GM12878 (cell line): ENCODE measurements at regions of chr17 and their contacts with region 1.

Region 1: GRCh38 chr17:32006957-32007462 is at the start of gene LRRC37B:
- DNase-seq: peak; percentile 23
- ATAC-seq: peak; percentile 96
- H3K4me3 ChIP-seq: peak within 1 kb of the TSS; percentile 95
- H3K27ac ChIP-seq: peak within 1 kb of the TSS; percentile 51
- H3K4me1 ChIP-seq: no peaks in the 10 kb centered on the region; the same call in 1 of the 2 replicates
- H3K27me3 ChIP-seq: no peaks in the 10 kb centered on the region
- CTCF ChIP-seq: peak; percentile 84 to 92 (median 92)
- EP300 ChIP-seq: no peak
- POLR2A ChIP-seq: peak; percentile 70
- RAD21 ChIP-seq: peak; percentile 46
- polyA plus RNA-seq, gene LRRC37B: 3.2 to 3.4 TPM

Region 2: GRCh38 chr17:31778523-31778922 is 228.5 kb before region 1 on chr17:
- CTCF ChIA-PET with region 1: no interaction called
- POLR2A ChIA-PET with region 1: no interaction called
- RAD21 ChIA-PET with region 1: no interaction called
- SMC1A ChIA-PET with region 1: no interaction called
- in situ Hi-C with region 1: no loop called
- intact Hi-C with region 1: no loop called
- DNase-seq: no peak
- ATAC-seq: no peak
- H3K4me3 ChIP-seq: no peak overlapping the region
- H3K27ac ChIP-seq: no peak overlapping the region
- H3K4me1 ChIP-seq: no peaks in the 10 kb centered on the region; the same call in 1 of the 2 replicates
- H3K27me3 ChIP-seq: no peaks in the 10 kb centered on the region
- CTCF ChIP-seq: no peak
- EP300 ChIP-seq: no peak
- POLR2A ChIP-seq: no peak
- RAD21 ChIP-seq: no peak

Region 3: GRCh38 chr17:32019228-32019627 is 12.2 kb after region 1 on chr17:
- CTCF ChIA-PET with region 1: interaction called, 11 read pairs
- POLR2A ChIA-PET with region 1: no interaction called
- RAD21 ChIA-PET with region 1: no interaction called
- SMC1A ChIA-PET with region 1: interaction called, 8 read pairs
- in situ Hi-C with region 1: no loop called
- intact Hi-C with region 1: no loop called
- DNase-seq: no peak
- ATAC-seq: no peak
- H3K4me3 ChIP-seq: no peak overlapping the region
- H3K27ac ChIP-seq: no peak overlapping the region
- H3K4me1 ChIP-seq: no peaks in the 10 kb centered on the region; the same call in 1 of the 2 replicates
- H3K27me3 ChIP-seq: no peaks in the 10 kb centered on the region
- CTCF ChIP-seq: no peak
- EP300 ChIP-seq: no peak
- POLR2A ChIP-seq: no peak
- RAD21 ChIP-seq: no peak

Region 4: DNA sequence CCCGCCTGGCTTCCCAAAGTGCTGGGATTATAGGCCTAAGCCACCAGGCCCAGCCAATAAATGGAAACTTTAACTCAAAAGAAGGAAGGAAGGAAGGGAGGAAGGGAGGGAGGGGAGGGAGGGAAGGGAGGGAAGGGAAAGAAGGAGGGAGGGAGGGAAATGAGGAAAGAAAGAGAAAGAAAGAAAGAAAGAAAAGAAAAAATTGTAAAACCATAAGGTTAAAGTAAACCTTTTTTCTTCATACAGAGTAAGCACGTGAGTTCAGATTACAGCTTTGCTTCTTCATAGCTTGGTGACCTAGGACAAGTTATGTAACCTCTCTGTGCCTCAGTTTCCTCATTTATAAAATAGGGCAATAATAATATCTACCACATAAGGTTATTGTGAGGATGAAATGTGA is 26.2 kb after region 1 on chr17:
- CTCF ChIA-PET with region 1: no interaction called
- POLR2A ChIA-PET with region 1: no interaction called
- RAD21 ChIA-PET with region 1: no interaction called
- SMC1A ChIA-PET with region 1: no interaction called
- in situ Hi-C with region 1: no loop called
- intact Hi-C with region 1: no loop called
- DNase-seq: no peak
- ATAC-seq: no peak
- H3K4me3 ChIP-seq: no peak overlapping the region
- H3K27ac ChIP-seq: no peak overlapping the region
- H3K4me1 ChIP-seq: no peaks in the 10 kb centered on the region
- H3K27me3 ChIP-seq: no peaks in the 10 kb centered on the region
- CTCF ChIP-seq: no peak
- EP300 ChIP-seq: no peak
- POLR2A ChIP-seq: no peak
- RAD21 ChIP-seq: no peak

Region 5: GRCh38 chr17:32127158-32127897 is 120.3 kb after region 1 on chr17:
- CTCF ChIA-PET with region 1: interaction called, 13 read pairs
- POLR2A ChIA-PET with region 1: interaction called, 4 read pairs
- RAD21 ChIA-PET with region 1: interaction called, 3 read pairs
- SMC1A ChIA-PET with region 1: interaction called, 5 read pairs
- in situ Hi-C with region 1: no loop called
- intact Hi-C with region 1: no loop called
- DNase-seq: peak; percentile 69
- ATAC-seq: peak; percentile 98
- H3K4me3 ChIP-seq: peak overlapping the region; percentile 80
- H3K27ac ChIP-seq: peak overlapping the region; percentile 95
- H3K4me1 ChIP-seq: peaks cover 7% of the 10 kb centered on the region; the same call in 1 of the 2 replicates
- H3K27me3 ChIP-seq: no peaks in the 10 kb centered on the region
- CTCF ChIP-seq: no peak
- EP300 ChIP-seq: no peak
- POLR2A ChIP-seq: peak; percentile 83
- RAD21 ChIP-seq: no peak

Region 6: DNA sequence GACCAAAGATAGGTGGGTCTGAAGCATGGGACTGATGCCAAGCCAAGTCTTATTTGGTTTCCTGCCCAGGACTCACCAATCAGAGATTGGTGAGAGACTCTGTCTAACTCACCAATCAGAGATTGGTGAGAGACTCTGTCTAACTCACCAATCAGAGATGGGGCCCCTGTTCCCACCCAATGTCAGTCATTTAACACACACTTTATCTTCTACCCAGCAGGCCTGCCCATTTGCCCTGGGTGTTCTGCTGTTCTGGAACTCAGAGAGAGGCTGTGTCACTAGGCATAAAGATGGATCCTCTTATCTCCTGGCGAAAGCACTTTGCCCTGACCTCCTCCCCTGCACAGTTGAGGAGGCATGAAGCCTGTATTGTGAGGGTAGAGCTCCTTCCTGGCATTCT is 129.8 kb after region 1 on chr17:
- CTCF ChIA-PET with region 1: interaction called, 84 read pairs
- POLR2A ChIA-PET with region 1: interaction called, 6 read pairs
- RAD21 ChIA-PET with region 1: interaction called, 22 read pairs
- SMC1A ChIA-PET with region 1: interaction called, 16 read pairs
- in situ Hi-C with region 1: loop called (anchors 5 kb)
- intact Hi-C with region 1: loop called (anchors 2 kb)
- DNase-seq: no peak
- ATAC-seq: peak; percentile 61
- H3K4me3 ChIP-seq: no peak overlapping the region
- H3K27ac ChIP-seq: no peak overlapping the region
- H3K4me1 ChIP-seq: peaks cover 4% of the 10 kb centered on the region; the same call in 1 of the 2 replicates
- H3K27me3 ChIP-seq: no peaks in the 10 kb centered on the region
- CTCF ChIP-seq: no peak
- EP300 ChIP-seq: no peak
- POLR2A ChIP-seq: no peak
- RAD21 ChIP-seq: no peak

Region 7: DNA sequence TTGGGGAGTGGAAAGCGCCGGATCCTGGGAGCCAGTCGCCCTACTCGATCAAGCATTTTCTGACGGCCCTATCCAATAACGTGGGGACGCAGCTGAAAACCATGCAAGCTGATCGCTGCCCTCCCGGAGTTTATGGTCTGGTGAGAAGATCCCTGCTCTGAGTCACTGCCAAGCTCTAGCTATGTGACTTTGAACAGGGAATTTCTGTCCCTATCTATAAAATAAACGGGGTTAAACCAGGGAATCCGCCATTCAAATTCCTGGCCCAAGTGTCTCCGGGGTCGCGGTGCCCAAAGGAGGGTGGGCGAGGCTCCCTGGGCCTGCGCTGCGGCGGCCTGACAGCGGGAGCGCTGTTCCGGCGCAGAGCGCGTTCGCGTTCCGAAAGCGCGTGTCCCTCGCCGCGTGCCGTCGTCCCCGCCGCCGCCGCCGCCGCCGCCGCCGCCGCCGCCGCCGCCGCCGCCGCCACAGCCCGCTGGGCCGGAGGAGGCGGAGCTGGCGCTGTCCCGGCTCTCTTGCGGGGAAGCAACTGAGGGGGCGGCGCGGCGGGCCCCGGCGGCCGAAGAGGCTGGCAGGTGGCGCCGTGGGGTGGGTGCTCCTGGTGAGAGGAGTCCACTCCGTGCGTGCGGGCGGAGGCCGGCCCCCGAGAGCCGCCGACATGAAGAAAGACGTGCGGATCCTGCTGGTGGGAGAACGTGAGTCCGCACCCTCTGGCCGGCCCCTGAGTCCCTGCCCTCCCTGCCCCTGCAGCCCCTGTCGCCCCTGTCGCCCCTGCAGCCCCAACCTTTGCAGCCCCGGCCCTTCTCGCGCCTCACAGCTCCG is 135.2 kb after region 1 on chr17 and contains the start of gene RHOT1:
- CTCF ChIA-PET with region 1: interaction called, 84 read pairs
- POLR2A ChIA-PET with region 1: interaction called, 6 read pairs
- RAD21 ChIA-PET with region 1: interaction called, 22 read pairs
- SMC1A ChIA-PET with region 1: interaction called, 16 read pairs
- in situ Hi-C with region 1: loop called (anchors 5 kb)
- intact Hi-C with region 1: loop called (anchors 2 kb)
- DNase-seq: peak; percentile 36
- ATAC-seq: peak; percentile 85
- H3K4me3 ChIP-seq: peak within 1 kb of the TSS; percentile 95
- H3K27ac ChIP-seq: peak within 1 kb of the TSS; percentile 64
- H3K4me1 ChIP-seq: peaks cover 4% of the 10 kb centered on the region
- H3K27me3 ChIP-seq: no peaks in the 10 kb centered on the region
- CTCF ChIP-seq: peak; percentile 62 to 81 (median 70)
- EP300 ChIP-seq: no peak
- POLR2A ChIP-seq: 0 out of 2 replicates have a peak, but pooled peaks have one; percentile 55
- RAD21 ChIP-seq: no peak
- polyA plus RNA-seq, gene RHOT1: 13.3 to 14.1 TPM